Breast epithelium (tissue), 4 donors: ENCODE measurements at regions of chr14 and their contacts with region 1.

Region 1: GRCh38 chr14:85010186-85010585 is 519.8 kb upstream of the FLRT2 start:
- DNase-seq: no peak
- H3K4me3 ChIP-seq: no peak overlapping the region
- H3K27ac ChIP-seq: no peak overlapping the region
- H3K4me1 ChIP-seq: no peaks in the 10 kb centered on the region
- H3K27me3 ChIP-seq: no peaks in the 10 kb centered on the region
- CTCF ChIP-seq: no peak
- POLR2A ChIP-seq: no peak

Region 2: GRCh38 chr14:85122690-85123089 is 112.5 kb after region 1 on chr14:
- intact Hi-C with region 1: loop called (anchors 5 kb)
- DNase-seq: no peak
- H3K4me3 ChIP-seq: no peak overlapping the region
- H3K27ac ChIP-seq: no peak overlapping the region
- H3K4me1 ChIP-seq: no peaks in the 10 kb centered on the region
- H3K27me3 ChIP-seq: no peaks in the 10 kb centered on the region
- CTCF ChIP-seq: no peak
- POLR2A ChIP-seq: no peak

Region 3: DNA sequence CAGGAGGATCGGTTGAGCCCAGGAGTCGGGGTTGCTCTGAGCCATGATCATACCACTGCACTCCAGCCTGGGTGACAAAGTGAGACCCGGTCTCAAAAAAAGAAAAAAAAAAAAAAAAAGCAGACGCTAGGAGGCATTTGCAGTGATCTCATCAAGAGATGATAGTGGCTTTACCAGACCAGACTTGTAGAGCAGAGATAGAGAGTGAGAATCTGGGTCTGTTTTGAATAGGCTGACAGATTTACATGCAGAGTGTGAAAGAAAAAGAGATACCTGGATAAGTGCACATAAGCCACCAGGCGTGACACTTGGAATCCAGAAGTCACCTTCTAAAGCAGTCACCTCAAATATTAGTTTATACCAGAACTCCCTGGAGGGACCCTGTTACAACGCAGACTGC is 498.7 kb after region 1 on chr14:
- intact Hi-C with region 1: no loop called
- DNase-seq: no peak
- H3K4me3 ChIP-seq: no peak overlapping the region
- H3K27ac ChIP-seq: no peak overlapping the region
- H3K4me1 ChIP-seq: no peaks in the 10 kb centered on the region
- H3K27me3 ChIP-seq: no peaks in the 10 kb centered on the region
- CTCF ChIP-seq: no peak
- POLR2A ChIP-seq: no peak

Region 4: GRCh38 chr14:86442135-86442534 is 1431.9 kb after region 1 on chr14:
- intact Hi-C with region 1: no loop called
- DNase-seq: no peak
- H3K4me3 ChIP-seq: no peak overlapping the region
- H3K27ac ChIP-seq: no peak overlapping the region
- H3K4me1 ChIP-seq: no peaks in the 10 kb centered on the region
- H3K27me3 ChIP-seq: no peaks in the 10 kb centered on the region
- CTCF ChIP-seq: no peak
- POLR2A ChIP-seq: no peak